BJ (cell line): ENCODE measurements at regions of chr7 and their contacts with region 1.

Region 1: GRCh38 chr7:75762314-75762917 is 9.6 kb downstream of the CCL26 start:
- DNase-seq: peak; percentile 17
- H3K4me3 ChIP-seq: no peak overlapping the region
- H3K27me3 ChIP-seq: no peaks in the 10 kb centered on the region
- CTCF ChIP-seq: peak; percentile 73

Region 2: GRCh38 chr7:75819711-75820110 is 57.3 kb after region 1 on chr7:
- CTCF ChIA-PET with region 1: no interaction called
- POLR2A ChIA-PET with region 1: no interaction called
- DNase-seq: no peak
- H3K4me3 ChIP-seq: no peak overlapping the region
- H3K27me3 ChIP-seq: peaks cover 9% of the 10 kb centered on the region
- CTCF ChIP-seq: no peak

Region 3: DNA sequence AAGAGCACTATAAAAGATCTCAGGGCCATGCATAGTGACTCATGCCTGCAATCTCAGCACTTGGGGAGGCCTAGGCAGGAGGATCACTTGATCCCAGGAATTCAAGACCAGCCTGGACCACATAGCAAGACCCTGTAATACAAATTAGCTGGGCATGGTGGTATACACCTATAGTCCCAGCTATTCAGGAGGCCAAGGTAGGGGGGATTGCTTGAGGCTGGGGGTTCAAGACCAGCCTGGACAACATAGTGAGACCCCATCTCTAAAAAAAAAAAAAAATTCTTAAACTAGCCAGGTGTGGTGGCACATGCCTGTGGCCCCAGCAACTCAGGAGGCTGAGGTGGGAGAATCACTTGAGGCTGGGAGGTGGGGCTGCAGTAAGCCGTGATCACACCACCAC is 269.5 kb after region 1 on chr7:
- CTCF ChIA-PET with region 1: no interaction called
- POLR2A ChIA-PET with region 1: interaction called, 15 read pairs
- DNase-seq: no peak
- H3K4me3 ChIP-seq: no peak overlapping the region
- H3K27me3 ChIP-seq: no peaks in the 10 kb centered on the region
- CTCF ChIP-seq: no peak